Caco-2 (cell line): ENCODE measurements at regions of chr12 and their contacts with region 1.

Region 1: DNA sequence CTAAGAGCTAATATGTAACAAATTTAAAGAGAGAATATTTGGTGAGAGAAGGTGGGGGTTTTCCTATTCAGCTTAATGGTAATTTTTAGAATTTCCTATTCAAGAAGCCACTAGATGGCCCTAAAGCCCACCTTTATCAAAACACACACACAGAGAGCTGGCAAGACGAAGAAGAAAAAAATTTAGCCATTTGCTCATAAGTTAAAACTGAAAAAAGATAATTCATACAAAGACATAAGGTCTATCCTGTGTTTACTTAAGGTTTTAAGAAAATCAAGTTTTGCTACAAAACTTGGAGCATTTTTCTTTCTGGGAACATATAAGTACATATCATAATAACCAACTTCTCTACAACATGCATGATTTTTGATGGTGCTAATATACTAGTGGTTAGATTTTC is 46.8 kb upstream of the PCED1B start:
- DNase-seq: peak in 1 of 2 experiments; percentile 52
- H3K4me3 ChIP-seq: no peak overlapping the region
- H3K4me3 Mint-ChIP-seq: no peak overlapping the region
- H3K27ac Mint-ChIP-seq: no peak overlapping the region
- H3K4me1 ChIP-seq: peaks cover 15% of the 10 kb centered on the region
- H3K4me1 Mint-ChIP-seq: peaks cover 47% of the 10 kb centered on the region
- H3K27me3 ChIP-seq: no peaks in the 10 kb centered on the region
- H3K27me3 Mint-ChIP-seq: no peaks in the 10 kb centered on the region
- CTCF ChIP-seq: peak; percentile 48 to 61

Region 2: DNA sequence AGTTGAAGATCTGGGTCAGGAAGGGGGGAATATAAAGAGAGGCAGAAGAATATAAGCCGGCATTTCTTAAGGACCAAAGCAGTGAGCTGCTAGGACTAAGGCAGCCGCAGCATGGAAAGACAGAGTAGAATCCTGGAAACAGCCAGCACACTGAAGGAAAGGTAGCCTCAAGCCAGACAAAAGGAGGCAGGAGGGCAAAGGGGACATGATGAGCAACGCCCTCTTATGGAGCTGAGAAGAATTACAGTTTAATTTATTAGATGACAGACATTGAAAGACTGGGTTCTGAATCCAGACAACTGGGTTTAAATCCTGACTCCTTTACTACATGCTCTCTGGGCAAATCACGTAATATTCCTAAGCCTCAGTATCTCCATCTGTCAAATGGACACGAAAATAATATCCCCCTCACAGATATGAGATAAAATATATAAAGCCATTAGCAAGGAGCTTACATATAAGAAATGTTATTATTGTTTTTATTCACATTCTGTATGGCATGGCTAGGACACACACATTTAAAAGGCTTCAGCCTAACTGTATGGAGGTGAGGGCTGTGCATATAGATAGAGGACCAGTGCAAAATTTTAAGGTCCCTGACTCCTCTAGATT is 38.7 kb after region 1 on chr12:
- CTCF ChIA-PET with region 1: interaction called, 59 read pairs
- POLR2A ChIA-PET with region 1: no interaction called
- intact Hi-C with region 1: loop called (anchors 1 kb)
- DNase-seq: peak; percentile 46 to 47
- H3K4me3 ChIP-seq: no peak overlapping the region
- H3K4me3 Mint-ChIP-seq: no peak overlapping the region
- H3K27ac Mint-ChIP-seq: no peak overlapping the region
- H3K4me1 ChIP-seq: no peaks in the 10 kb centered on the region
- H3K4me1 Mint-ChIP-seq: no peaks in the 10 kb centered on the region
- H3K27me3 ChIP-seq: no peaks in the 10 kb centered on the region
- H3K27me3 Mint-ChIP-seq: peaks cover 3% of the 10 kb centered on the region
- CTCF ChIP-seq: peak; percentile 56 to 57

Region 3: GRCh38 chr12:47223848-47224213 is 191.2 kb after region 1 on chr12:
- CTCF ChIA-PET with region 1: no interaction called
- POLR2A ChIA-PET with region 1: no interaction called
- intact Hi-C with region 1: loop called (anchors 2 kb)
- DNase-seq: peak; percentile 59 to 67
- H3K4me3 ChIP-seq: no peak overlapping the region
- H3K4me3 Mint-ChIP-seq: peak overlapping the region; percentile 47
- H3K27ac Mint-ChIP-seq: peak overlapping the region; percentile 66
- H3K4me1 ChIP-seq: peaks cover 69% of the 10 kb centered on the region
- H3K4me1 Mint-ChIP-seq: peaks cover 42% of the 10 kb centered on the region
- H3K27me3 ChIP-seq: no peaks in the 10 kb centered on the region
- H3K27me3 Mint-ChIP-seq: no peaks in the 10 kb centered on the region
- CTCF ChIP-seq: peak in 1 of 2 experiments; percentile 7

Region 4: DNA sequence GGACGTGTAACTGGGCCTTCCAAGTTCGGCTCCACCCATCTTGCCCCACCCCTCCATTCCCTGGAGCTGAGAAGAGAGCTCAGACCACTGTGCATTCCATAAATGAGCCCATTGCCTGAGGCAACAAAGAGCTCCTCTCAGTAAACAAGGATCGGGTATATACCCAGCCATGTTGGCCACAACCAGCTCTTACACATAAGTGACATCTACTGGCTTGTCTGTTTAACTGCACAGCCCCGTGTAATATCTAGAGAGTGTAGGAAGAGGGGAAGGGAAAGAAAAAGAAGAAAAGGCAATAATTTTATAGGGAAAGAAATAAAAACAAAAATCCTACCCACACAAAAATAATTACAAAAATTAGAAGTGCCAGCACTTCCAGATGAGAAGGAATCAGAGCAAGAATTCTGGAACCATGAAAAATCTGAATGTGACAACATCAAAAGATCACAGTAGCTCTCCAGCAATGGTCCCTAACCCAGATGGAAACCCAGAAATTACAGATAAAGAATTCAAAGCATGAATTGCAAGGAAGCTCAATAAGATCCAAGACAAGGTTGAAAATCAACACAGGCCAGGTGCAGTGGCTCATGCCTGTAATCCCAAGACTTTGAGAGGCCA is 365.1 kb after region 1 on chr12:
- CTCF ChIA-PET with region 1: interaction called, 31 read pairs
- POLR2A ChIA-PET with region 1: no interaction called
- intact Hi-C with region 1: loop called (anchors 1 kb)
- DNase-seq: peak; percentile 66 to 74
- H3K4me3 ChIP-seq: no peak overlapping the region
- H3K4me3 Mint-ChIP-seq: no peak overlapping the region
- H3K27ac Mint-ChIP-seq: no peak overlapping the region
- H3K4me1 ChIP-seq: peaks cover 9% of the 10 kb centered on the region; the same call in 1 of the 2 replicates
- H3K4me1 Mint-ChIP-seq: no peaks in the 10 kb centered on the region
- H3K27me3 ChIP-seq: no peaks in the 10 kb centered on the region
- H3K27me3 Mint-ChIP-seq: no peaks in the 10 kb centered on the region
- CTCF ChIP-seq: peak; percentile 43 to 51

Region 5: DNA sequence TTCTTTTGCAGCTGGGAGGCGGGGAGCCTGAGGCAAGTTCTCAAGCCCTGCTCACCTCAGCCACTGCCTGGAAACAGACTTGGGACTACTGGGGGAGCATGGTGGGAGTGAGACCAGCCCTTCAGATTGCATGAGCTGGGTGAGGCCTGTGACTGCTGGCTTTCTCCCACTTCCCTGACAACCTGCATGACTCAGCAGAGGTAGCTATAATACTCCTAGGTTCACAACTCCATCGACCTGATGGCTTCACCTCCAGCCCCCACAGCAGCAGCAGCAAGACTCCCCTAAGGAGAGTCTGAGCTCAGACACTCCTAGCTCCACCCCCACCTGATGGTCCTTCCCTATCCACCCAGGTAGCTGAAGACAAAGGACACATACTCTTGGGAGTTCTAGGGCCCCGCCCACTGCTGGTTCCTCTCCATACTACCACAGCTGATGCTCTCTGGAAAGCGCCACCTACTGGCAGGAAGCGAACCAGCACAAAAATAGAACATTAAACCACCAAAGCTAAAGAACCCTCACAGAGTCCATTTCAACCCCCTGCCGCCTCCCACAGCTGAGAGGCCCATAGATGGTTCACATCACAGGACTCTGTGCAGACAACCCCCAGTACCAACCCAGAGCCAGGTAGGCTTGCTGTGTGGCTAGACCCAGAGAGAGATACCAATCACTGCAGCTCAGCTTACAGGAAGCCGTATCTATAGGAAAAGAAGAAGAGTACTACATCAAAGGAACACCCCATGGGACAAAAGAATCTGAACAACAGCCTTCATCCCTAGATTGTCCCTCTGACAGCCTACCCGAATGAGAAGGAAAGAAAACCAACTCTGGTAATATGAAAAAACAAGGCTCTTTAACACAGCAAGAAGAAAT is 604.5 kb after region 1 on chr12:
- CTCF ChIA-PET with region 1: interaction called, 7 read pairs
- POLR2A ChIA-PET with region 1: no interaction called
- intact Hi-C with region 1: loop called (anchors 5 kb)
- DNase-seq: peak; percentile 66 to 75
- H3K4me3 ChIP-seq: no peak overlapping the region
- H3K4me3 Mint-ChIP-seq: no peak overlapping the region
- H3K27ac Mint-ChIP-seq: no peak overlapping the region
- H3K4me1 ChIP-seq: no peaks in the 10 kb centered on the region
- H3K4me1 Mint-ChIP-seq: no peaks in the 10 kb centered on the region
- H3K27me3 ChIP-seq: no peaks in the 10 kb centered on the region
- H3K27me3 Mint-ChIP-seq: no peaks in the 10 kb centered on the region
- CTCF ChIP-seq: peak; percentile 54 to 68